Transverse colon (tissue), 4 donors: ENCODE measurements at regions of chr20 and their contacts with region 1.

Region 1: GRCh38 chr20:14264869-14265268 is 72.5 kb downstream of the FLRT3 start:
- DNase-seq: no peak
- H3K4me3 ChIP-seq: no peak overlapping the region
- H3K27ac ChIP-seq: no peak overlapping the region
- H3K4me1 ChIP-seq: no peaks in the 10 kb centered on the region
- H3K27me3 ChIP-seq: no peaks in the 10 kb centered on the region
- CTCF ChIP-seq: peak; percentile 23 to 46 (median 37)
- EP300 ChIP-seq: no peak
- POLR2A ChIP-seq: no peak

Region 2: GRCh38 chr20:14155361-14155760 is 109.5 kb before region 1 on chr20:
- in situ Hi-C with region 1: loop called in 1 of 4 experiments (anchors 25 kb)
- intact Hi-C with region 1: no loop called
- DNase-seq: no peak
- H3K4me3 ChIP-seq: no peak overlapping the region
- H3K27ac ChIP-seq: no peak overlapping the region
- H3K4me1 ChIP-seq: no peaks in the 10 kb centered on the region
- H3K27me3 ChIP-seq: no peaks in the 10 kb centered on the region
- CTCF ChIP-seq: no peak
- EP300 ChIP-seq: no peak
- POLR2A ChIP-seq: no peak

Region 3: GRCh38 chr20:14235355-14235754 is 29.5 kb before region 1 on chr20:
- in situ Hi-C with region 1: no loop called
- intact Hi-C with region 1: no loop called
- DNase-seq: no peak
- H3K4me3 ChIP-seq: no peak overlapping the region
- H3K27ac ChIP-seq: no peak overlapping the region
- H3K4me1 ChIP-seq: no peaks in the 10 kb centered on the region
- H3K27me3 ChIP-seq: no peaks in the 10 kb centered on the region
- CTCF ChIP-seq: no peak
- EP300 ChIP-seq: no peak
- POLR2A ChIP-seq: no peak